ENCODE measurements at regions of chr1 and their contacts with region 1.

Region 1: DNA sequence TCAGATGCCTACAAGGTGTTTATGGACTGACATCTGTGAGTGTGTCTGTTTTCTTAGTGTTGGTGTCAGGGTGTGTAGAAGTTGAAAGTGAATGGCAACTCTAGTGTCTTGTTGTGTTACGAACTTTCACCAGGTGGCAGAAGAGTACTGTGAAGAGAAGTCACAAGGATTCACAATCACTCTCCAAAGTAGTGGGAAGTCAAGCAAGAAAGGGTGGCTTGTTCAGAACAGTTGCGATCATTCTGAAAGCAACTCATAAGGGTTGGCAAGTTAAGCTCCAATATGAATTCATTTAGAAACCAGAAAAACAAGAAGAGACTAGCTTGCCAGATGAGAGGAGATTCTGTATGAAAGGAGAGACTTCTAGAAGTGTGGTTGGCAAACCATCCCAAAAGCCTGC is 86.1 kb downstream of the FASLG start:
- DNase-seq: peak; percentile 78
- H3K4me3 ChIP-seq: no peak overlapping the region
- H3K27ac ChIP-seq: no peak overlapping the region
- H3K4me1 ChIP-seq: peaks cover 21% of the 10 kb centered on the region
- H3K27me3 ChIP-seq: no peaks in the 10 kb centered on the region
- CTCF ChIP-seq: peak; percentile 74 to 79

Region 2: GRCh38 chr1:172421974-172422604 is 322.9 kb before region 1 on chr1:
- CTCF ChIA-PET with region 1: no interaction called
- dilution Hi-C with region 1: no loop called
- in situ Hi-C with region 1: no loop called
- intact Hi-C with region 1: no loop called
- DNase-seq: no peak
- H3K4me3 ChIP-seq: no peak overlapping the region
- H3K27ac ChIP-seq: no peak overlapping the region
- H3K4me1 ChIP-seq: peaks cover 24% of the 10 kb centered on the region
- H3K27me3 ChIP-seq: no peaks in the 10 kb centered on the region
- CTCF ChIP-seq: no peak

Region 3: GRCh38 chr1:172826096-172826743 is 81.2 kb after region 1 on chr1:
- CTCF ChIA-PET with region 1: no interaction called
- dilution Hi-C with region 1: no loop called
- in situ Hi-C with region 1: no loop called
- intact Hi-C with region 1: loop called (anchors 1 kb)
- DNase-seq: peak; percentile 68
- H3K4me3 ChIP-seq: no peak overlapping the region
- H3K27ac ChIP-seq: no peak overlapping the region
- H3K4me1 ChIP-seq: peaks cover 5% of the 10 kb centered on the region
- H3K27me3 ChIP-seq: no peaks in the 10 kb centered on the region
- CTCF ChIP-seq: peak; percentile 56 to 73

Region 4: GRCh38 chr1:173062156-173062938 is 317.3 kb after region 1 on chr1:
- CTCF ChIA-PET with region 1: no interaction called
- dilution Hi-C with region 1: no loop called
- in situ Hi-C with region 1: no loop called
- intact Hi-C with region 1: loop called (anchors 10 kb)
- DNase-seq: peak; percentile 93
- H3K4me3 ChIP-seq: no peak overlapping the region
- H3K27ac ChIP-seq: no peak overlapping the region
- H3K4me1 ChIP-seq: peaks cover 23% of the 10 kb centered on the region
- H3K27me3 ChIP-seq: no peaks in the 10 kb centered on the region
- CTCF ChIP-seq: no peak

Region 5: GRCh38 chr1:173255214-173255813 is 510.3 kb after region 1 on chr1:
- CTCF ChIA-PET with region 1: no interaction called
- dilution Hi-C with region 1: no loop called
- in situ Hi-C with region 1: no loop called
- intact Hi-C with region 1: loop called (anchors 2 kb)
- DNase-seq: peak; percentile 21
- H3K4me3 ChIP-seq: no peak overlapping the region
- H3K27ac ChIP-seq: no peak overlapping the region
- H3K4me1 ChIP-seq: peaks cover 4% of the 10 kb centered on the region
- H3K27me3 ChIP-seq: no peaks in the 10 kb centered on the region
- CTCF ChIP-seq: peak; percentile 82 to 85

Region 6: GRCh38 chr1:173714759-173715537 is 969.9 kb after region 1 on chr1 and contains the start of gene KLHL20:
- CTCF ChIA-PET with region 1: no interaction called
- dilution Hi-C with region 1: no loop called
- in situ Hi-C with region 1: no loop called
- intact Hi-C with region 1: loop called (anchors 10 kb)
- DNase-seq: peak; percentile 89
- H3K4me3 ChIP-seq: peak within 1 kb of the TSS; percentile 74 to 95 (median 84)
- H3K27ac ChIP-seq: peak within 1 kb of the TSS; percentile 47
- H3K4me1 ChIP-seq: peaks cover 4% of the 10 kb centered on the region
- H3K27me3 ChIP-seq: no peaks in the 10 kb centered on the region
- CTCF ChIP-seq: no peak
- total RNA-seq, gene KLHL20: 25.7 to 26.3 TPM

Region 7: GRCh38 chr1:174217787-174218574 is 1473.0 kb after region 1 on chr1:
- CTCF ChIA-PET with region 1: no interaction called
- dilution Hi-C with region 1: no loop called
- in situ Hi-C with region 1: no loop called
- intact Hi-C with region 1: loop called (anchors 2 kb)
- DNase-seq: peak; percentile 27
- H3K4me3 ChIP-seq: no peak overlapping the region
- H3K27ac ChIP-seq: no peak overlapping the region
- H3K4me1 ChIP-seq: peaks cover 15% of the 10 kb centered on the region
- H3K27me3 ChIP-seq: no peaks in the 10 kb centered on the region
- CTCF ChIP-seq: peak; percentile 72 to 86

Region 8: GRCh38 chr1:174407665-174408064 is 1662.7 kb after region 1 on chr1:
- CTCF ChIA-PET with region 1: no interaction called
- dilution Hi-C with region 1: no loop called
- in situ Hi-C with region 1: no loop called
- intact Hi-C with region 1: no loop called
- DNase-seq: no peak
- H3K4me3 ChIP-seq: no peak overlapping the region
- H3K27ac ChIP-seq: no peak overlapping the region
- H3K4me1 ChIP-seq: peaks cover 10% of the 10 kb centered on the region
- H3K27me3 ChIP-seq: no peaks in the 10 kb centered on the region
- CTCF ChIP-seq: no peak

Measured in mammary epithelial cell (primary cell).